ENCODE measurements at regions of chr3 and their contacts with region 1.

Region 1: GRCh38 chr3:129052675-129053074 is 7.9 kb upstream of the GP9 start:
- DNase-seq: no peak
- ATAC-seq: no peak
- H3K4me3 ChIP-seq: no peak overlapping the region
- H3K27ac ChIP-seq: no peak overlapping the region
- H3K4me1 ChIP-seq: peaks cover 0 to 26% of the 10 kb centered on the region in 2 experiments; a peak in 3 of 4 replicates
- H3K27me3 ChIP-seq: no peaks in the 10 kb centered on the region
- CTCF ChIP-seq: no peak
- POLR2A ChIP-seq: no peak
- RAD21 ChIP-seq: no peak

Region 2: DNA sequence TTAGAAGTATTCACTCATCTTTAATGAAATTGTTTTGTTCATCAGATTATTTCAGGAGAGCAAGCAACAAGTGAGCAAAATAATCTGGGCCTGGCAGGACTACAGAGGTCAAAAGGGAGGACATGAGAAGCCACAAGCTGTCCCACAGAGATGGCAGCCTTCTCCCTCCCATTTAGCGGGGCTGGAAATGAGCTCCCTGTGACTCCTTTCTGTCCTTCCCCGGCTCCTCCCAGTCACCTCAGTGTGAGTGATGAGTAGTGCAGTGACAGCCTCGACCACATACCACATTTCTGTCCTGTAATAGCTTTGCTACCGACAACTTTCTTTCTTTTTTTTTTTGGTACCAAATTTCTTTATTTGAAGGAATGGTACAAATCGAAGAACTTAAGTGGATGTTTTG is 288.7 kb before region 1 on chr3:
- CTCF ChIA-PET with region 1: no interaction called
- POLR2A ChIA-PET with region 1: no interaction called
- RAD21 ChIA-PET with region 1: no interaction called
- intact Hi-C with region 1: no loop called
- DNase-seq: no peak
- ATAC-seq: no peak
- H3K4me3 ChIP-seq: no peak overlapping the region
- H3K27ac ChIP-seq: no peak overlapping the region
- H3K4me1 ChIP-seq: no peaks in the 10 kb centered on the region
- H3K27me3 ChIP-seq: no peaks in the 10 kb centered on the region
- CTCF ChIP-seq: no peak
- POLR2A ChIP-seq: no peak
- RAD21 ChIP-seq: no peak

Region 3: DNA sequence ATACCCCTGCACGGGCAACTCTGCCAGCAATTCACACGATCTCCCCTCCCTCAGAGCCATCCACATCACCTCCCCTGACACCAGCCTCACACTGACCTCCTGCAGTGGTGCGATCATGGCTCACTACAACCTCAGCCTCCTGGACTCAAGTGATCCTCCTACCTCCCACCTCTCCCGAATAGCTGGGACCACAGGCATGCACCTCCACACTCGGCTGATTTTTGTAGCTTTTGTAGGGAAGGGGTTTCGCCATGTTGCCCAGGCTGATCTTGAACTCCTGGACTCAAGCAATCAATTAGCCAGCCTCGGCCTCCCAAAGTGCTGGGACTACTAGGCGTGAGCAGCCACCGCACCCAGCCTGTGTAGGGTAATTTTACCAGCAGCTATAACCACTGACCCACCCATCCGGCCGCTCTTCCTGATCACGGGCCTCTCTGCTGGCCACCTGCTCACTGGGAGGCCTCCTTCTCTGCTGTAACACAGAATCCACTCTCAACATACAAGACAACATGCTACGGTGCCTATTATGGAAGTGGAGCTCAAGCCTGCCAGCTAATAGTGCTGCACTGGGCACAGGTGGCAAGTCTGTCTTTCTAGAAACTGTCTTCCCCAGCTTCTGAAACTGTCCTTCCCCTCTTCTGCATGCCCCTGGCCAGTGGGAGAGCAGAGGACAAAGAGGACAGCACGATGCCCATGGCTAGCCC is 12.5 kb after region 1 on chr3:
- CTCF ChIA-PET with region 1: interaction called, 15 read pairs
- POLR2A ChIA-PET with region 1: interaction called, 3 read pairs
- RAD21 ChIA-PET with region 1: no interaction called
- intact Hi-C with region 1: no loop called
- DNase-seq: no peak
- ATAC-seq: no peak
- H3K4me3 ChIP-seq: no peak overlapping the region
- H3K27ac ChIP-seq: no peak overlapping the region
- H3K4me1 ChIP-seq: no peaks in the 10 kb centered on the region
- H3K27me3 ChIP-seq: no peaks in the 10 kb centered on the region
- CTCF ChIP-seq: no peak
- POLR2A ChIP-seq: no peak
- RAD21 ChIP-seq: no peak

Region 4: DNA sequence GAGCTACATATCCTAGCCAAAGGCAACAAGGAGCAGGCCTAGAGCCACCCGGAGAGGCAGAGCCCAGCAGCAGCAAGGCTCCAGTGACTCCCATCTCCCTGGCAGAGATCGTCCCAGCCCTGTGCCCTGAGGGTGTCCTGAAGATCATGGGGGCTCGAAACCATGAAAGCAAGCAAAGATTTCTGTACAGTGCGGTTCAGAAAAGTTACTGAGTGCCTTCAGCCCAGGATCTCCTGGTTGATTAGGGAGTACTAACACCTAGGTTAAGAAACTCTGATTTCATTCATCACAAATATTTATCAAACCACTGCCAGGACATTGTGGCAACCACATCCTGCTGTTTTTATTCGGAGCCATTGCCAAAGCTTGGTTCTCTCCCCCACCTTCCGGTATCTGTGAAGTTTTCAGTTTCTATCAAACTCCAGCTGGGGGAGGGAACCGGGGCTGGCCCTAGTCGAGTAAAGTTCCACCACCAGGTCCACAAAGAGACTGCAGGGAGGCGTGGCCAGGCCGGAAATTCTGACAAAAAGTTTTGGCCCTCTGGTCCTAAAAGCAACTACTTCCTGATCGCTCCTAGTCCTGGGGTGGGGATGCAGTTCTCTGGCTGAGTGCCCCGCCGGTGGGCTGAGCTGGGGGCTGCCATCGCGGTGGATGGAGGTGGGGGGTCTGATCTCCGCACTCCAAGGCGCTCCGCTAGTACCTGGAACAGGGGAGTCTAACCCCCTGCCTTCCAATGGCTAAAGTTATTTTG is 67.8 kb after region 1 on chr3:
- CTCF ChIA-PET with region 1: interaction called, 16 read pairs
- POLR2A ChIA-PET with region 1: no interaction called
- RAD21 ChIA-PET with region 1: no interaction called
- intact Hi-C with region 1: no loop called
- DNase-seq: peak; percentile 51
- ATAC-seq: peak; percentile 31
- H3K4me3 ChIP-seq: peak overlapping the region; percentile 69 to 76
- H3K27ac ChIP-seq: peak overlapping the region; percentile 70
- H3K4me1 ChIP-seq: peaks cover 16 to 36% of the 10 kb centered on the region in 2 experiments
- H3K27me3 ChIP-seq: no peaks in the 10 kb centered on the region
- CTCF ChIP-seq: peak in 2 of 3 experiments; percentile 13 to 26; a peak in 1 of 6 replicates
- POLR2A ChIP-seq: no peak
- RAD21 ChIP-seq: no peak

Region 5: DNA sequence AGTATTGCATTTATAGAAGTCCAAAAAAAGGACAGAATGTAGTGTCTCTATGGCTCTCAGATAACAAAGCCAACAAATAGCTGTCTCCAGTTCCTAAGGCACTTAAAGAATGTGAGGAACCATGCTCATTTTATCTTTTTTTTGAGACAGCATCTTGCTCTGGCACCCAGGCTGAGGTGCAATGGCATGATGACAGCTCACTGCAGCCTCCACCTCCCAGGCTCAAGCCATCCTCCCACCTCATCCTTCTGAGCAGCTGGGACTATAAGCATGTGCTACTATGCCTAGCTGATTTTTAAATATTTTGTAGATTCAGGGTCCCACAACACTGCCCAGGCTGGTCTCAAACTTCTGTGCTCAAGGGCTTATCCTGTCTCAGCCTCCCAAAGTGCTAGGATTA is 92.1 kb after region 1 on chr3:
- CTCF ChIA-PET with region 1: no interaction called
- POLR2A ChIA-PET with region 1: no interaction called
- RAD21 ChIA-PET with region 1: no interaction called
- intact Hi-C with region 1: no loop called
- DNase-seq: no peak
- ATAC-seq: no peak
- H3K4me3 ChIP-seq: no peak overlapping the region
- H3K27ac ChIP-seq: no peak overlapping the region
- H3K4me1 ChIP-seq: no peaks in the 10 kb centered on the region
- H3K27me3 ChIP-seq: no peaks in the 10 kb centered on the region
- CTCF ChIP-seq: no peak
- POLR2A ChIP-seq: no peak
- RAD21 ChIP-seq: no peak

Region 6: GRCh38 chr3:129918461-129918860 is 865.8 kb after region 1 on chr3:
- CTCF ChIA-PET with region 1: no interaction called
- POLR2A ChIA-PET with region 1: no interaction called
- RAD21 ChIA-PET with region 1: no interaction called
- intact Hi-C with region 1: no loop called
- DNase-seq: no peak
- ATAC-seq: no peak
- H3K4me3 ChIP-seq: no peak overlapping the region
- H3K27ac ChIP-seq: no peak overlapping the region
- H3K4me1 ChIP-seq: no peaks in the 10 kb centered on the region
- H3K27me3 ChIP-seq: no peaks in the 10 kb centered on the region
- CTCF ChIP-seq: no peak
- POLR2A ChIP-seq: no peak
- RAD21 ChIP-seq: no peak

Measured in HCT116 (cell line).